AG04450 (cell line): ENCODE measurements at regions of chr2 and their contacts with region 1.

Region 1: GRCh38 chr2:157194097-157194688 is 63.3 kb upstream of the GALNT5 start:
- DNase-seq: no peak
- H3K4me3 ChIP-seq: no peak overlapping the region
- H3K27ac ChIP-seq: no peak overlapping the region
- H3K27me3 ChIP-seq: no peaks in the 10 kb centered on the region
- CTCF ChIP-seq: peak; percentile 75

Region 2: GRCh38 chr2:155377266-155377680 is 1816.9 kb before region 1 on chr2:
- CTCF ChIA-PET with region 1: interaction called, 32 read pairs
- POLR2A ChIA-PET with region 1: no interaction called
- DNase-seq: no peak
- H3K4me3 ChIP-seq: no peak overlapping the region
- H3K27ac ChIP-seq: no peak overlapping the region
- H3K27me3 ChIP-seq: no peaks in the 10 kb centered on the region
- CTCF ChIP-seq: 0 out of 2 replicates have a peak, but pooled peaks have one; percentile 33

Region 3: GRCh38 chr2:156589381-156590079 is 604.7 kb before region 1 on chr2:
- CTCF ChIA-PET with region 1: interaction called, 34 read pairs
- POLR2A ChIA-PET with region 1: no interaction called
- DNase-seq: peak; percentile 11
- H3K4me3 ChIP-seq: no peak overlapping the region
- H3K27ac ChIP-seq: no peak overlapping the region
- H3K27me3 ChIP-seq: no peaks in the 10 kb centered on the region
- CTCF ChIP-seq: peak; percentile 68

Region 4: GRCh38 chr2:156892467-156893281 is 301.5 kb before region 1 on chr2:
- CTCF ChIA-PET with region 1: interaction called, 15 read pairs
- POLR2A ChIA-PET with region 1: no interaction called
- DNase-seq: no peak
- H3K4me3 ChIP-seq: peak overlapping the region; percentile 45
- H3K27ac ChIP-seq: no peak overlapping the region
- H3K27me3 ChIP-seq: no peaks in the 10 kb centered on the region
- CTCF ChIP-seq: peak; percentile 58

Region 5: GRCh38 chr2:157055660-157056199 is 138.5 kb before region 1 on chr2:
- CTCF ChIA-PET with region 1: interaction called, 26 read pairs
- POLR2A ChIA-PET with region 1: interaction called, 4 read pairs
- DNase-seq: no peak
- H3K4me3 ChIP-seq: no peak overlapping the region
- H3K27ac ChIP-seq: no peak overlapping the region
- H3K27me3 ChIP-seq: no peaks in the 10 kb centered on the region
- CTCF ChIP-seq: peak; percentile 60

Region 6: GRCh38 chr2:157182834-157183396 is 11.3 kb before region 1 on chr2:
- CTCF ChIA-PET with region 1: interaction called, 22 read pairs
- POLR2A ChIA-PET with region 1: no interaction called
- DNase-seq: peak; percentile 85
- H3K4me3 ChIP-seq: no peak overlapping the region
- H3K27ac ChIP-seq: peak overlapping the region; percentile 92
- H3K27me3 ChIP-seq: no peaks in the 10 kb centered on the region
- CTCF ChIP-seq: no peak

Region 7: DNA sequence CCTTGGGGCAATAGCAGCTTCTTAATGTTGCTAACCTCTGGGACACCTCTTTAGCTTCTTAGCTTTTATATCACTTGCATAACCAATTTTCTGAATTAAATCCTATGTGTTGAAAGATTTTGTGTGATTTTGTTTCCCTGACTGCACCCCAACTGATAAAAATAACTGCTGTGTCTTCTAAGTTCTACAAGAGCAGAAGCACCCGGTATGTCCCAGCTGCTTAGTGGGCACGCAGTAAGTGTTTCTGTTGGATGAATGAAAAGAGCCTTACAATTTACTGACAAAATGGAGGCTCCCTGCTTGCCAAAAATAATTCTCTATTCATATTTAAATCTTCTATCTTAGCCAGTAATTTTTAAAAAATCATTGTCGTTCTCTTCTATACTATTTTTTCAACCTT is 10.2 kb after region 1 on chr2:
- CTCF ChIA-PET with region 1: interaction called, 24 read pairs
- POLR2A ChIA-PET with region 1: no interaction called
- DNase-seq: no peak
- H3K4me3 ChIP-seq: no peak overlapping the region
- H3K27ac ChIP-seq: no peak overlapping the region
- H3K27me3 ChIP-seq: no peaks in the 10 kb centered on the region
- CTCF ChIP-seq: no peak

Region 8: DNA sequence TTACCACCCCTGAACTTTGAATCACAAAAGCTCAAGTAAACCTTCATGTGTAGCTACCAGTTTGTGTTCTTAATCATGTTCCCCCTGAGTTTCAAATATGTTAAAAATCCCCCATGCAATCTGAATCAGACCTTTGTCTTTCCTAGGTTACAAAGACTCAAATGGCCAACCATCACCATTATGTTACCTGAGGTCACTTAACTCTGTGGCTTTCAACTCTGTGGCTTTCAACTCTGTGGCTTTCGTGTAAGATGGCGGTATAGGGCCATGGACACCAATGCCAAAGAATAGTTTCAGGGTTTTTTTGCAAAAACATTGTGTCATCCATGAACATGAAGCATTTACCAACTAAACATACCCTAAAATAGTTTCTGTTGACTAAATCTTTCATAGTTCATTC is 124.7 kb after region 1 on chr2:
- CTCF ChIA-PET with region 1: no interaction called
- POLR2A ChIA-PET with region 1: no interaction called
- DNase-seq: no peak
- H3K4me3 ChIP-seq: no peak overlapping the region
- H3K27ac ChIP-seq: no peak overlapping the region
- H3K27me3 ChIP-seq: no peaks in the 10 kb centered on the region
- CTCF ChIP-seq: no peak